ENCODE measurements at regions of chr1 and their contacts with region 1.

Region 1: GRCh38 chr1:62131093-62131725 is 63.4 kb upstream of the L1TD1 start:
- DNase-seq: peak in 2 of 5 donors; percentile 25 to 34
- ATAC-seq: peak in 3 of 4 donors; percentile 81 to 89 (median 82)
- H3K4me3 ChIP-seq: no peak overlapping the region
- H3K27ac ChIP-seq: no peak overlapping the region
- H3K4me1 ChIP-seq: no peaks in the 10 kb centered on the region
- H3K27me3 ChIP-seq: no peaks in the 10 kb centered on the region
- CTCF ChIP-seq: peak; percentile 51 to 86 (median 78)
- POLR2A ChIP-seq: no peak

Region 2: GRCh38 chr1:61950418-61950817 is 180.8 kb before region 1 on chr1:
- intact Hi-C with region 1: loop called in 1 of 10 experiments (anchors 10 kb)
- DNase-seq: no peak
- ATAC-seq: peak in 1 of 4 donors; percentile 33
- H3K4me3 ChIP-seq: no peak overlapping the region
- H3K27ac ChIP-seq: peak overlapping the region in 9 of 12 donors; percentile 16 to 91 (median 53)
- H3K4me1 ChIP-seq: peaks cover 0 to 9% (median 4%) of the 10 kb centered on the region in 12 donors
- H3K27me3 ChIP-seq: no peaks in the 10 kb centered on the region
- CTCF ChIP-seq: peak in 10 of 12 donors; percentile 7 to 50 (median 39)
- POLR2A ChIP-seq: no peak

Region 3: DNA sequence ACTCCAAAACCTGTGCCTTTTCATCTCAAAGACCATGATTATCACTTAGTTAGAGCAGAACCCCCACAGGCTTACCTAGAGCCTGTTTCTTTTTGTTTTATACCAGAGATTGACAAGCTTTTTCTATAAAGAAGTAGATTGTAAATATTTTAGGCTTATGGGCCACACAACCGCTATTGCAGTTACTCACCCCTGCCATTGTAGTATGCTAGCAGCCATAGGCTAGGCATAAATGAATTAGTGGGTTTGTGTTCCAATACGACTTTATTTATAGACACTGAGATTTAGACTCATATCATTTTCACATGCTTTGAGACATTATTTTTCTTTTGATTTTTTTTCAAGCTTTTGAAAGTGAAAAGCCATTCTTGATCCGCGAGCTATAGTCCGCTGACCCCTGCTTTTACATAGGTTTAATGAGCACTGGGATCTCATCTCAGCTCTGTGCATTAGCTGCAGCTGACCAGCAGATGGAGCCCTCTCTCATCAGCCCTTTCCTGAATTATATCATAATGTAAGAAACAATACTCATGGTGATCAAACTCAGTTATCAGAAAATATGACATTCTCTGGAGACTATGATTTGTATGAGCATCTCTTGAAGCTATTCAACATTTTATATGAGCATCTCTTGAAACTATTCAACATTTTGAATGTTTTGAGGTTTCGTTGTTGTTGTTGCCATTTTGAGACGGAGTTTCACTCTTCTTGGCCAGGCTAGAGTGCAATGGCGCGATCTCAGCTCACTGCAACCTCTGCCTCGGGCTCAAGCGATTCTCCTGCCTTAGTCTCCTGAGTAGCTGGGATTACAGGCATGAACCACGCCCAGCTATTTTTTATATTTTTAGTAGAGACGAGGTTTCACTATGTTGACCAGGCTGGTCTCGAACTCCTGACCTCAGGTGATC is 48.5 kb before region 1 on chr1:
- intact Hi-C with region 1: loop called in 6 of 10 experiments (anchors 2 to 10 kb)
- DNase-seq: peak in 2 of 5 donors; percentile 15 to 28
- ATAC-seq: peak in 3 of 4 donors; percentile 38 to 60 (median 46)
- H3K4me3 ChIP-seq: no peak overlapping the region
- H3K27ac ChIP-seq: no peak overlapping the region
- H3K4me1 ChIP-seq: peaks cover 0 to 12% (median 4%) of the 10 kb centered on the region in 12 donors
- H3K27me3 ChIP-seq: no peaks in the 10 kb centered on the region
- CTCF ChIP-seq: peak; percentile 78 to 99 (median 86)
- POLR2A ChIP-seq: no peak

Region 4: GRCh38 chr1:62198781-62199125 is 67.5 kb after region 1 on chr1:
- intact Hi-C with region 1: no loop called
- DNase-seq: no peak
- ATAC-seq: peak in 1 of 4 donors; percentile 31
- H3K4me3 ChIP-seq: no peak overlapping the region
- H3K27ac ChIP-seq: no peak overlapping the region
- H3K4me1 ChIP-seq: peaks cover 0 to 14% (median 0%) of the 10 kb centered on the region in 12 donors
- H3K27me3 ChIP-seq: peaks cover 8 to 36% (median 22%) of the 10 kb centered on the region in 9 donors
- CTCF ChIP-seq: no peak
- POLR2A ChIP-seq: no peak

Region 5: DNA sequence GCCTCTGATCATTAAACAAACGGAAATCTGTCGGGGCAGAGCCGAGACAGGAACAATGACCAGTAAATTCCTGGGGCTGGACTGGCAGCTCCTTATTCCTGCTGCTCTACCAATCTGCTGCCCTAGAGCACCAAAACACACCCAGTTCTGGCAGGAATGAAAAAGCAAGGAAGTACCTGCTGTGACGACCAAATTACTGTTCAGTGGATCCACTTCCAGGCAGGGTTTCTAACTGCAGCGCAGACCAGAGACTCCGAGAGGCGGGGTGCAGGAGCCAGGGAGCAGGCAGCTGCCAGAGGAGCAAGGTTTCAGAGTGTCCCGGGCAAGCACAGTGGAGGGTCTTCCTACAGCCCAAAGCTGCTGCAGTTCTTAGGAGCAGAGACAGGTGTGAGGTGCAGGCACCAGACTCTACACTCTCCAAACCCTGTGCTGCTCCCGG is 155.6 kb after region 1 on chr1:
- intact Hi-C with region 1: no loop called
- DNase-seq: no peak
- ATAC-seq: no peak
- H3K4me3 ChIP-seq: peak overlapping the region in 5 of 12 donors; percentile 0 to 32 (median 17)
- H3K27ac ChIP-seq: no peak overlapping the region
- H3K4me1 ChIP-seq: peaks cover 0 to 17% (median 0%) of the 10 kb centered on the region in 12 donors
- H3K27me3 ChIP-seq: peaks cover 0 to 39% (median 0%) of the 10 kb centered on the region in 9 donors
- CTCF ChIP-seq: no peak
- POLR2A ChIP-seq: no peak

Measured in heart left ventricle (tissue), 16 donors.